Activated T-helper 1 cell treated with anti-CD3 and anti-CD28 coated beads, Interleukin-12 subunit alpha, Interleukin-12 subunit beta, Interleukin-2, Interleukin-4 antibody, amounts not matched to agents 30 ng/mL and 10 ng/mL and 1 ng/mL, durations not matched to agents 14 hours and 24 hours and 36 hours (primary cell): ENCODE measurements at regions of chr5 and their contacts with region 1.

Region 1: GRCh38 chr5:180718810-180719453 is 20.9 kb downstream of the OR2Y1 start:
- DNase-seq: no peak
- H3K4me3 Mint-ChIP-seq: no peak overlapping the region
- H3K27ac Mint-ChIP-seq: no peak overlapping the region
- H3K4me1 Mint-ChIP-seq: peaks cover 14% of the 10 kb centered on the region
- H3K27me3 Mint-ChIP-seq: peaks cover 11% of the 10 kb centered on the region

Region 2: DNA sequence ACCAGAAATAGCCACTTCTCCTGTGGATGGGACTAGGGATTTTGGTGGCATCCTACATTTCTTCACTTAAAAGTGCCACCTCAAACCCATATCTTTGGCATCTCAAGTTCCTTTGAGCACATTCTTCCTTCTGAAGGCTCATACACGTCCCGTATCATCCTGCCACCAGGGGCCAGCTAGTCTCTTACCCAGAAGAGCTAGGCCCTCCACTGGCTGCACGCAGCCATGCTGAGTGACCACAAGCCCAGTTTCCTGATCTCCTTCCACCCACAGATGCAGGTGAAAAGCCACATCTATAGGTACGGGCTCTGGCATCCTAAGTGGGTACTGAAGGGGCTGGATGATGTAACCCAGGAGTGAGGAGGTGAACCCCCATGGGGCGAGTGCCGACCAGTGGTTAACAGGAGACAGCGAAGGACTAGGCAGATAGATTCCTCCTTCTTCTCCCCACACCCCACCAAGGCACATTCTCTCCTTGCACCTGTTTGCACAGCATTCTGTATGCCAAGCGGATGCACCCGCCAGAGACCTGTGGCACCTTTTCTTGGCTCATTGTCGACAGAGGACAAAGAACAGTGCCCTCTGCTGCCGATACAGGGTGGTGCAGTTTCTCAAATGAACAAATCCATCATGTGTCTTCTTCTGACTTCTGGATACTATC is 113.2 kb before region 1 on chr5:
- intact Hi-C with region 1: loop called (anchors 1 kb)
- DNase-seq: peak; percentile 32
- H3K4me3 Mint-ChIP-seq: no peak overlapping the region
- H3K27ac Mint-ChIP-seq: no peak overlapping the region
- H3K4me1 Mint-ChIP-seq: no peaks in the 10 kb centered on the region
- H3K27me3 Mint-ChIP-seq: peaks cover 3% of the 10 kb centered on the region

Region 3: GRCh38 chr5:180648641-180649296 is 70.2 kb before region 1 on chr5:
- intact Hi-C with region 1: loop called (anchors 2 kb)
- DNase-seq: no peak
- H3K4me3 Mint-ChIP-seq: peak overlapping the region; percentile 77
- H3K27ac Mint-ChIP-seq: no peak overlapping the region
- H3K4me1 Mint-ChIP-seq: peaks cover 10% of the 10 kb centered on the region
- H3K27me3 Mint-ChIP-seq: peaks cover 38% of the 10 kb centered on the region

Region 4: DNA sequence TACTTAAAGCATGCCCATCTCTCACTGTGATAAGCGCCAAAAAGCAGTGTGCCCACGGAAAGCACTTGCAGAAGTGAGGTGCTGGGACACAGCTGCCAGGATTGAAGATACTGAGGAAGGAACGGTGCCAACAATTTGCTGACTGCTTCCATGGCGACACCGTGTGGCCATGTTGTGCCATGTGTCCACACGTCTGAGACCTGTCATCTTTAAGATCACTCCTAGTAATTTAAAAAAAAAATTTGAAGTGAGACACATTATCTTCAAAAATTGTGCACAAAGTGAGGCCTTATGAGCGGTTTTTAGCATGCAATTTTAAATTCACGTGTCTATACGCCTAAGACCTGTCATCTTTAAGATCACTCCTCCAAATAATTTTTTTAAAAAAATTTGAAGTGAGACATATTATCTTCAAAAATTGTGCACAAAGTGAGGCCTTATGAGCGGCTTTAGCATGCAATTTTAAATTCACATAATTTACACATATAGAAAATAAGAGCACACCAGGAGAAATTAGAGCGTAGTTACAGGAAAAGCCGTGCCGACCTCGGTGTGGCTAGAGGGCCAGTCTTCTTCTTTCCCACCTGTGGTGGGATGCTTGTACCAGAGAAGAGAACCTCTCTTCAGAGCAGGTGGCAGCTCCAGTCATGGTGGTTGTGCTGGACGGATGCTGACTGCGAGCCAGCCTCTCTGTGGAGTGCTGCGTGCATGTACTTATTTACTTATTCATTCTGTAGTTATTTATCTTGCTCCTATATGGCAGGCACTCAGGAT is 48.2 kb before region 1 on chr5:
- intact Hi-C with region 1: loop called (anchors 1 kb)
- DNase-seq: peak; percentile 17
- H3K4me3 Mint-ChIP-seq: no peak overlapping the region
- H3K27ac Mint-ChIP-seq: no peak overlapping the region
- H3K4me1 Mint-ChIP-seq: peaks cover 13% of the 10 kb centered on the region
- H3K27me3 Mint-ChIP-seq: peaks cover 24% of the 10 kb centered on the region

Region 5: GRCh38 chr5:180689071-180689694 is 29.7 kb before region 1 on chr5:
- intact Hi-C with region 1: loop called (anchors 1 kb)
- DNase-seq: peak; percentile 21
- H3K4me3 Mint-ChIP-seq: peak overlapping the region; percentile 51
- H3K27ac Mint-ChIP-seq: peak overlapping the region; percentile 45
- H3K4me1 Mint-ChIP-seq: peaks cover 21% of the 10 kb centered on the region
- H3K27me3 Mint-ChIP-seq: no peaks in the 10 kb centered on the region